Aorta (tissue), 5 donors: ENCODE measurements at regions of chr22 and their contacts with region 1.

Region 1: DNA sequence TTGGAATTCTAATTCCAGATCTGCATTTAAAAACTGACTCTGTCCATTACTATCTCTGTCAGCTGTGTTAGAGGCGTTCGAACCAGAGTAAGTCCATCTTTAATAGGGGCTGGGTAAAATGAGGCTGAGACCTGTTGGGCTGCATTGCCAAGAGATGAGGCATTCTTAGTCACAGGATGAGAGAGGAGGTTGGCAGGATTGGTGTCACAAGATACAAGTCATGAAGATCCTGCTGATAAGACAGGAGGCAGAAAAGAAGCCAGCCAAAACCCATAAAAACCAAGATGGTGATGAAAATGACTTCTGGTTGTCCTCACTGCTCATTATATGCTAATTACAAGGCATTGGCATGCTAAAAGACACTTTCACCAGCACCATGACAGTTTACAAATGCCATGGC is 356.3 kb upstream of the ISX start:
- DNase-seq: no peak
- ATAC-seq: no peak
- H3K4me3 ChIP-seq: no peak overlapping the region
- H3K27ac ChIP-seq: no peak overlapping the region
- H3K4me1 ChIP-seq: no peaks in the 10 kb centered on the region
- H3K27me3 ChIP-seq: peaks cover 0 to 1% of the 10 kb centered on the region in 2 donors

Region 2: DNA sequence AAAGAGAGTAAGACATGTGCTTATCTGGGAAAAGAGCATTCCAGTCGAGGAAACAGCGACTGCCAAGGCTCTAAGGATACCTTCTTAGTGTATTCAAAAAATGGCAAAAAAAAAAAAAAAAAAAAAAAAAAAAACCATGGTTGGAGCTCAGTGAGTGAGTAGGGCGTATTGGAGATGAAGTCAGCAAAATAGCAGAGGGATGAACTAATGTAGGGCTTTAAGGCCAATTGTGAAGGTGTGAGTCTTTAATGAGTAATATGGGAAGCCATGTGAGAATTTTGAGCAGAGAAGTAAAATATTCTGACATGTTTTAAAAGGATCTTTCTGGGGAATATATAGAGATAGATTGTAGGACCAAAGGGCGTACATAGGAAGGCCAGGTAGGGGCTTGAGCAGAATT is 142.3 kb before region 1 on chr22:
- intact Hi-C with region 1: no loop called
- DNase-seq: no peak
- ATAC-seq: no peak
- H3K4me3 ChIP-seq: no peak overlapping the region
- H3K27ac ChIP-seq: no peak overlapping the region
- H3K4me1 ChIP-seq: no peaks in the 10 kb centered on the region
- H3K27me3 ChIP-seq: no peaks in the 10 kb centered on the region

Region 3: DNA sequence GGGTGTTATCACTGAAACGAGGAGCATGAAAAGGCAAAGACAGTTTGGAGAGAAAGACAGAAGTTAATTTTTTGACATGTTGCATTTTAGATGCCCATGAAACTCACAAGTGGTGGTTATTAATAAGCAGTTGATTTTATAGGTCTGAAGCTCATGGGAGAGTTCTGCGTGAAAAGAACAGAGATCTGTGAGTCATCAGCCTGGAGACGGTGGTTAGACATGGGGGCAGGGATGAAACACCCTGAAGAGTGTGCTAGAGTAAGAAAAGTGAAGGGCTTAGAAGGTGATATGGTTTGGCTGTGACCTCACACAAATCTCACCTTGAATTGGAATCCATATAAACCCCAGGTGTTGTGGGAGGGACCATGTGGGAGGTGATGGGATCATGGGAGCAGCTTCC is 67.2 kb after region 1 on chr22:
- intact Hi-C with region 1: no loop called
- DNase-seq: no peak
- ATAC-seq: no peak
- H3K4me3 ChIP-seq: no peak overlapping the region
- H3K27ac ChIP-seq: no peak overlapping the region
- H3K4me1 ChIP-seq: no peaks in the 10 kb centered on the region
- H3K27me3 ChIP-seq: no peaks in the 10 kb centered on the region

Region 4: GRCh38 chr22:34878996-34879395 is 169.4 kb after region 1 on chr22:
- intact Hi-C with region 1: no loop called
- DNase-seq: no peak
- ATAC-seq: no peak
- H3K4me3 ChIP-seq: no peak overlapping the region
- H3K27ac ChIP-seq: no peak overlapping the region
- H3K4me1 ChIP-seq: no peaks in the 10 kb centered on the region
- H3K27me3 ChIP-seq: no peaks in the 10 kb centered on the region

Region 5: DNA sequence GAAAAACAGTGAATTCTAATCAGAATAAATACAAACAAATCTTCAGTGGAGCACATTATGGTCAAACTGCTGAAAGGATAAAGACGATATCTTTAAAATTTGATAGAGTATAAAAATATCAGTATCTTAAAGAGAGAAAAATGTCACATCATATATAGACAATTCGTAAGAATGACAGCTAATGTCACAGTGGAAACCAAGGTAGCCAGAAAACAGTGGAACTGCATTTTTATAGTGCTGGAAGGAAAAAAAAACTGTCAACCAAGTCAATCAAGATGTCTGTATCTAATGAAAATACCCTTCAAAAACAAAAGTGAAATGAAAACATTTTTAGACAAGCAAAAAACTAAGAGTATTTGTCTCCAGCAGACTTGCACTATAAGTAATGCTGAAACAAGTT is 474.3 kb after region 1 on chr22:
- intact Hi-C with region 1: loop called in 1 of 2 experiments (anchors 10 kb)
- DNase-seq: no peak
- ATAC-seq: no peak
- H3K4me3 ChIP-seq: no peak overlapping the region
- H3K27ac ChIP-seq: no peak overlapping the region
- H3K4me1 ChIP-seq: no peaks in the 10 kb centered on the region
- H3K27me3 ChIP-seq: no peaks in the 10 kb centered on the region